ENCODE measurements at regions of chr19 and their contacts with region 1.

Region 1: GRCh38 chr19:52189735-52190486 is at the start of gene PPP2R1A:
- DNase-seq: peak; percentile 100
- ATAC-seq: peak; percentile 92
- H3K4me3 ChIP-seq: peak within 1 kb of the TSS; percentile 91
- H3K27ac ChIP-seq: peak within 1 kb of the TSS; percentile 98
- H3K4me1 ChIP-seq: no peaks in the 10 kb centered on the region; the same call in 1 of the 2 replicates
- H3K27me3 ChIP-seq: no peaks in the 10 kb centered on the region
- CTCF ChIP-seq: no peak
- EP300 ChIP-seq: no peak
- POLR2A ChIP-seq: peak; percentile 97
- RAD21 ChIP-seq: no peak
- polyA plus RNA-seq, gene PPP2R1A: 16.0 to 29.2 TPM

Region 2: DNA sequence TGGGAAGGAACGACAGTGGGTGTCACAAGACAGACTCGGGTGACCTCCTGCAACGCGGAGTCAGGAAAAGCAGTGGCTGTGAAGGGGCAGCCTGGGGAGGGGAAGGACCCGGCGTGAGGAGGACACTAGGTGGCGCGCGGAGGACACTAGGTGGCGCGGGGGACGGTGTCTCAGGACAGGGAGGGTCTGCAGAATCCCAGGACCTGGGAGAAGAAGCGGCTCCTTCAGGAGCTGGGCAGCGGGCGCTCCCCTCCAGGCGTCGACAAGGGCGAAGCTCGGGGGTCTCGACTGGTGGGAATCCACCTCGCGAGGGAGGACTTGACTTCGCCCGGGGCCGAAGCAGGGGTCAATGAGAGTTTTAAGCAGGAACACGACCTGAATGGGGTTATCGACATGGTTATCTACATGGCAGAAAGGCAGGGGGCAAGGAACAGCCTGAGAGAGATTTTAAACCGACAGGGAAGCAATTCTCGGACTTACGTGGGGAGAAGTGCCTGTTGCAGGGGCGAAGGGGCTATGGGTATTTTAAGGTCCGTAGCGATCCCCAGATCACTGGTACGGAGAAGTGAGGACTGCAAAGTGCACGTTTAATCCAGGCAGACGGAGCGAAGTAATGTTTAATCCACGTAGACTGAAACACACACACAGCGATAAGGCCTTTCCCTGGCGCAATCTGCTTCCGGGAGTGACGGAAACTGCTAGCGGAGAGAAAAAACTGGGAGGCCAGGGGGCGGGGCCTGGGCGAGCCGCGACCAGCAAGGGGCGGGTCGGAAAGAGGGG is 50.5 kb before region 1 on chr19 and contains the start of gene ZNF616:
- CTCF ChIA-PET with region 1: interaction called, 10 read pairs
- POLR2A ChIA-PET with region 1: interaction called, 5 read pairs
- RAD21 ChIA-PET with region 1: interaction called, 5 read pairs
- SMC1A ChIA-PET with region 1: interaction called, 3 read pairs
- in situ Hi-C with region 1: no loop called
- intact Hi-C with region 1: loop called (anchors 5 kb)
- DNase-seq: peak; percentile 71
- ATAC-seq: peak; percentile 97
- H3K4me3 ChIP-seq: peak within 1 kb of the TSS; percentile 99
- H3K27ac ChIP-seq: peak within 1 kb of the TSS; percentile 84
- H3K4me1 ChIP-seq: peaks cover 5% of the 10 kb centered on the region
- H3K27me3 ChIP-seq: no peaks in the 10 kb centered on the region
- CTCF ChIP-seq: peak; percentile 67 to 88 (median 82)
- EP300 ChIP-seq: no peak
- POLR2A ChIP-seq: peak; percentile 71
- RAD21 ChIP-seq: peak; percentile 62
- polyA plus RNA-seq, gene ZNF616: 1.1 to 1.4 TPM

Region 3: GRCh38 chr19:52171321-52172169 is 18.4 kb before region 1 on chr19 and contains the start of gene ZNF836:
- CTCF ChIA-PET with region 1: interaction called, 8 read pairs
- POLR2A ChIA-PET with region 1: interaction called, 10 read pairs
- RAD21 ChIA-PET with region 1: interaction called, 7 read pairs
- SMC1A ChIA-PET with region 1: interaction called, 4 read pairs
- in situ Hi-C with region 1: no loop called
- intact Hi-C with region 1: no loop called
- DNase-seq: peak; percentile 51
- ATAC-seq: peak; percentile 98
- H3K4me3 ChIP-seq: peak within 1 kb of the TSS; percentile 92
- H3K27ac ChIP-seq: peak within 1 kb of the TSS; percentile 59
- H3K4me1 ChIP-seq: peaks cover 4% of the 10 kb centered on the region
- H3K27me3 ChIP-seq: no peaks in the 10 kb centered on the region
- CTCF ChIP-seq: no peak
- EP300 ChIP-seq: no peak
- POLR2A ChIP-seq: peak; percentile 78
- RAD21 ChIP-seq: no peak
- polyA plus RNA-seq, gene ZNF836: 5.8 to 9.2 TPM

Region 4: DNA sequence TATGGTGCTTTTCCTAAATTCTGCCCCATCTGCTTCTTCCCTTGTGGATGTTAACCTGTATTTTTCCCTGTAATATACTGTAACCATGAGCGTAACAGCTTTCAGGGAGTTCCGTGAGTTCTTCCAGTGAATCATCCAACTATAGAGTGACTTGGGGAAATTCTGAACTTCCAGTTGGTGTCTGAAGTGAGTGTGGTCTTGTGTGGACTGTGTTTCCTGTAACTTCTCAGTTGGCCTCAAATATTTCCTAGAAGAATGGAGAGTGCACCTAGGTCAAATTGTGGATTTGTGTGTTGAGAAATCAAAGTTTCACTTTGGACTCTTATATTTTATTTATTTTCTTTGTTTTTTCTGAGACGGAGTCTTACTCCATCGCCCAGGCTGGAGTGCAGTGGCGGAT is 68.5 kb after region 1 on chr19:
- CTCF ChIA-PET with region 1: no interaction called
- POLR2A ChIA-PET with region 1: no interaction called
- RAD21 ChIA-PET with region 1: no interaction called
- SMC1A ChIA-PET with region 1: no interaction called
- in situ Hi-C with region 1: no loop called
- intact Hi-C with region 1: no loop called
- DNase-seq: no peak
- ATAC-seq: no peak
- H3K4me3 ChIP-seq: no peak overlapping the region
- H3K27ac ChIP-seq: no peak overlapping the region
- H3K4me1 ChIP-seq: no peaks in the 10 kb centered on the region
- H3K27me3 ChIP-seq: no peaks in the 10 kb centered on the region
- CTCF ChIP-seq: no peak
- EP300 ChIP-seq: no peak
- POLR2A ChIP-seq: no peak
- RAD21 ChIP-seq: no peak